CD4-positive, alpha-beta memory T cell (primary cell): ENCODE measurements at regions of chr2 and their contacts with region 1.

Region 1: DNA sequence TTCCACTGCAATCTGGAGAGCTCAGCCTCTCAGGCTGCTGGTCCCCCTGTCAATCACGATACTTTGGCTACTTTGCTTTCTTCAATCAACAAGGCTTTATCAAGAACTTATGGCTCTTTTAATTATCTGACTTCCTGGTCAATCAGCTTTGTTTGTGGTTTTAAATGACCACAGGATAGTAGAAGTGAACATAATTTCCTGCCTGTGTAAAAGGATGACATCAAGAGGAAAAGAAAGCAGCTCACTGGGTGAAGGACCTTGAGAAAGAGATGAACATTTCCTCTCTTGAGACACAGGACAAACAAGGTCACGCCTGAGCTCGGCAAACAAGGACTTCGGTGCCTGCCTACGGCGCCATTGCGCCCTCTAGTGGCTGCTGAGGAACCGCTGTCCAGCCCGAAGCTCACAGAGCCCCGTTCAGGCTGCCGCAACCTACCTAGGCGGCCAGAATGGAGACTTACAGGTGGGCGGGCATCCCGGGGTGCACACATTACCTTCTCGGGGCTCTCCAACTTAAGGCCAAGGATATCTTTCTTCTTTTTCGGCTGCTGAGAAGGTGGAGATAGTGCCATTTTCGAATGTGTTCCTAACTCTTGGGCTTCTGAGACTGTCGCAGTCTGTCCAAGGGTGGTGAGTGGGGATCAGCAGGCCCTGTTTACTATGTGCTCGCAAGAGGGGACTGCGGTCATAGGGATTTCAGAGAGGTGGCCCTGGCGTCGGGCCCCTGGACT is 54.0 kb downstream of the IL1RL2 start:
- DNase-seq: peak; percentile 77 to 83 (median 77)
- H3K4me3 ChIP-seq: no peak overlapping the region
- H3K4me3 Mint-ChIP-seq: peak overlapping the region in 4 of 8 donors; percentile 10 to 57 (median 38)
- H3K27ac ChIP-seq: no peak overlapping the region
- H3K27ac Mint-ChIP-seq: peak overlapping the region in 6 of 7 donors; percentile 3 to 78 (median 62)
- H3K4me1 ChIP-seq: peaks cover 12% of the 10 kb centered on the region
- H3K4me1 Mint-ChIP-seq: peaks cover 6 to 19% (median 11%) of the 10 kb centered on the region in 4 donors
- H3K27me3 ChIP-seq: no peaks in the 10 kb centered on the region
- H3K27me3 Mint-ChIP-seq: no peaks in the 10 kb centered on the region

Region 2: DNA sequence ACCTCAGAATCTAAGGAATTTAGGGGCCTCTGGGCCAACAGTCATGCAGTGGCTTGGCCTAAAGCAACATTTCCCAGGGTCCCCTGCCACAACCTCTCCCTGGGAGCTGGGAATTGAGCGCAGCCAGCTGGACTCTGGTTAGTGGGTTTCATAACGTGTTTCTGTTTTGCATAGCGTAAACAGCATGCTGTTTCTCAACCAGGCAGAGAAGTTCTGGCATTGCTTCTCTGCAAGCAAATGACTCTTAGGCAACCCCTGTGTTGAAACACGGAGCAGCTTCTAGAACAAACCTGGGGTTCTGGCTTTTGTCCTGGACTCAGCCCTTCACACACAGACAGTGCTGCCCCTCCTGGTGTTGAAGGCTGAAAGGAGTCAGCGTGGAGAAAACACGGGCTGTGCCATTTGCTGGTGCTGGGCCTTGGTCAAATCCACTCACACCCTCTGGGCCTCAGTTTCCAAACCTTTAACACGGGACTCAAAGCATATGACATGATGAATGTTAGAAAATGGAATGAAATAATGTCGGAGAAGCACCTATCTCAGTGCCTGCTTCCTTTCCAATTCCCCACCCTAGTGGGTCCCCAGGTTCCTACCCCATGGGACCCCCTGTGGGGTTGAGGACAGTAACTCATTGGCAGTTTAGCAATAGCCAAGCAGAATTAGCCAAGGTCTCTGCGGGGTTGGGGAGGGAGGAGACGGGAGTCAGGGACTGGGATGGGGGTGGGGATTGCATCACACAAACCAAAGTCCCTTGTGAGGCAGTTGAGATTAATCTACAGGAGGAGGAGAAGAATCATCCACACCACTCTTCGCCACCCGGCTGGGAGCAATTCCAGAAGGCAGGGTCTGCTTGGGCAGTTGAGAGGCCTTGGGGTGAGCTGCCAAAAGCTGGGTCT is 279.3 kb before region 1 on chr2:
- CTCF ChIA-PET with region 1: no interaction called
- POLR2A ChIA-PET with region 1: no interaction called
- intact Hi-C with region 1: no loop called
- DNase-seq: no peak
- H3K4me3 ChIP-seq: no peak overlapping the region
- H3K4me3 Mint-ChIP-seq: no peak overlapping the region
- H3K27ac ChIP-seq: no peak overlapping the region
- H3K27ac Mint-ChIP-seq: no peak overlapping the region
- H3K4me1 ChIP-seq: no peaks in the 10 kb centered on the region
- H3K4me1 Mint-ChIP-seq: no peaks in the 10 kb centered on the region
- H3K27me3 ChIP-seq: no peaks in the 10 kb centered on the region
- H3K27me3 Mint-ChIP-seq: peaks cover 0 to 3% of the 10 kb centered on the region in 2 donors

Region 3: GRCh38 chr2:102005989-102006885 is 234.6 kb before region 1 on chr2:
- CTCF ChIA-PET with region 1: interaction called, 73 read pairs
- POLR2A ChIA-PET with region 1: no interaction called
- intact Hi-C with region 1: no loop called
- DNase-seq: peak in 2 of 5 donors; percentile 22 to 28
- H3K4me3 ChIP-seq: no peak overlapping the region
- H3K4me3 Mint-ChIP-seq: peak overlapping the region in 3 of 8 donors; percentile 3 to 43 (median 4)
- H3K27ac ChIP-seq: no peak overlapping the region
- H3K27ac Mint-ChIP-seq: no peak overlapping the region
- H3K4me1 ChIP-seq: peaks cover 7% of the 10 kb centered on the region
- H3K4me1 Mint-ChIP-seq: peaks cover 3 to 8% (median 7%) of the 10 kb centered on the region in 4 donors
- H3K27me3 ChIP-seq: no peaks in the 10 kb centered on the region
- H3K27me3 Mint-ChIP-seq: peaks cover 3 to 4% of the 10 kb centered on the region in 2 donors

Region 4: GRCh38 chr2:102082571-102083392 is 158.0 kb before region 1 on chr2:
- CTCF ChIA-PET with region 1: interaction called, 17 read pairs
- POLR2A ChIA-PET with region 1: interaction called, 4 read pairs
- intact Hi-C with region 1: no loop called
- DNase-seq: peak; percentile 51 to 65 (median 54)
- H3K4me3 ChIP-seq: peak overlapping the region; percentile 2 to 32
- H3K4me3 Mint-ChIP-seq: peak overlapping the region; percentile 81 to 87 (median 84)
- H3K27ac ChIP-seq: peak overlapping the region; percentile 46
- H3K27ac Mint-ChIP-seq: peak overlapping the region; percentile 86 to 97 (median 95)
- H3K4me1 ChIP-seq: peaks cover 29% of the 10 kb centered on the region
- H3K4me1 Mint-ChIP-seq: peaks cover 26 to 43% (median 35%) of the 10 kb centered on the region in 4 donors
- H3K27me3 ChIP-seq: no peaks in the 10 kb centered on the region
- H3K27me3 Mint-ChIP-seq: no peaks in the 10 kb centered on the region

Region 5: DNA sequence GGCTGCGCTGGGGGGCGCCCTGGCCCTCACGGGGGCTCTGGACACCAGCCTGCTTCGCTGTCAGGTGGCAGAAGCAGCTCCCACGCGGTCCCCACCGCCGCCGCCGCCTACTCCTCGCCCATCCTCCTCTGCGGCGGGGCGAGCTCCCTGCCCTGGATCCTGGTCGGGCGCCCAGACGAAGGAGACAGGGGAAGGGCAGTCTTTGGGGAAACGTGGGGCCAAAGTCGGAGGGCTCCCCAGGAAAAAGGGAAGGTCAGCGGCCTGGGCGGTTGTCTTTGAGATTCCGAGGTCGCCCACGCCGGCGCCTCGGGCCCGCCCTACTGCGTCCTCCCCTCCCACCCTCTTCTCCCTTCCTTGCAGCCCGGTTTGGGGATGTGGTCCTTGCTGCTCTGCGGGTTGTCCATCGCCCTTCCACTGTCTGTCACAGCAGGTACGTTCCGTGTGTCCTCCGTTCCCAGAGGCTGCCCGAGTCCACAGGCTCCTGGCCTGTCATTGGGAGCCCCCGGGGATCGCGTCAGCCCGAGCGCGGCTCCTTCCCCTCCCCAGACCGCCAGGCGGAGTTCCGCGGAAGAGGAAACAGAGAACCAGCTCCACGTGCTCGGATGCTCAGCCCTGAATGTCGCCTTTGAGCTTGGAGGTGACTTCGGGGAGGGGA is 53.2 kb before region 1 on chr2:
- CTCF ChIA-PET with region 1: interaction called, 118 read pairs
- POLR2A ChIA-PET with region 1: interaction called, 10 read pairs
- intact Hi-C with region 1: loop called (anchors 1 kb)
- DNase-seq: peak; percentile 19 to 52 (median 39)
- H3K4me3 ChIP-seq: peak overlapping the region in 1 of 2 donors; percentile 36
- H3K4me3 Mint-ChIP-seq: peak overlapping the region; percentile 86 to 95 (median 88)
- H3K27ac ChIP-seq: no peak overlapping the region
- H3K27ac Mint-ChIP-seq: peak overlapping the region in 5 of 7 donors; percentile 81 to 93 (median 85)
- H3K4me1 ChIP-seq: peaks cover 9% of the 10 kb centered on the region
- H3K4me1 Mint-ChIP-seq: peaks cover 8 to 19% (median 13%) of the 10 kb centered on the region in 4 donors
- H3K27me3 ChIP-seq: no peaks in the 10 kb centered on the region
- H3K27me3 Mint-ChIP-seq: peaks cover 5 to 8% of the 10 kb centered on the region in 2 donors

Region 6: GRCh38 chr2:102217032-102217431 is 23.8 kb before region 1 on chr2:
- CTCF ChIA-PET with region 1: interaction called, 33 read pairs
- POLR2A ChIA-PET with region 1: interaction called, 3 read pairs
- intact Hi-C with region 1: no loop called
- DNase-seq: no peak
- H3K4me3 ChIP-seq: no peak overlapping the region
- H3K4me3 Mint-ChIP-seq: no peak overlapping the region
- H3K27ac ChIP-seq: no peak overlapping the region
- H3K27ac Mint-ChIP-seq: no peak overlapping the region
- H3K4me1 ChIP-seq: peaks cover 16% of the 10 kb centered on the region
- H3K4me1 Mint-ChIP-seq: peaks cover 13 to 23% (median 16%) of the 10 kb centered on the region in 4 donors
- H3K27me3 ChIP-seq: no peaks in the 10 kb centered on the region
- H3K27me3 Mint-ChIP-seq: no peaks in the 10 kb centered on the region

Region 7: DNA sequence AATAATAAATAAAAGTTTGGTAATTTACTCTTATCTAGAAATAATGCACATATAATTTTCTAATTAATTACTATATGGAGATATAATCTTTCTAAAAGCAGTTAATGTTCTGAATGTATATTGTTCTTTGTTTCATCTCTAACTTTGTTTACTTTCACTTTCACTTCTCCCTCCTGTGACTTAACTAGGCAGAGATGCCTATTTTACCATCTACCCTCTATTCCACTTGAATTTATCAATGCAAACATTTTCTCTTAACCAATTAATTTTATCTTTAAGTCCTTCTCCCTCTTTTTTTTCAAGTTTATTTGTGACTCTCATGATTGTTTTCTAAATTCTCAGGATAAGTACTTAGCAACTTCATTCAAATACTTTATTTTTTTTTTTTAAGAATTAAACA is 15.5 kb after region 1 on chr2:
- CTCF ChIA-PET with region 1: interaction called, 100 read pairs
- POLR2A ChIA-PET with region 1: no interaction called
- intact Hi-C with region 1: no loop called
- DNase-seq: peak in 2 of 5 donors; percentile 26 to 35
- H3K4me3 ChIP-seq: no peak overlapping the region
- H3K4me3 Mint-ChIP-seq: peak overlapping the region; percentile 43 to 88 (median 75)
- H3K27ac ChIP-seq: no peak overlapping the region
- H3K27ac Mint-ChIP-seq: peak overlapping the region in 5 of 7 donors; percentile 3 to 70 (median 63)
- H3K4me1 ChIP-seq: peaks cover 42% of the 10 kb centered on the region
- H3K4me1 Mint-ChIP-seq: peaks cover 29 to 58% (median 39%) of the 10 kb centered on the region in 4 donors
- H3K27me3 ChIP-seq: no peaks in the 10 kb centered on the region
- H3K27me3 Mint-ChIP-seq: peaks cover 0 to 2% of the 10 kb centered on the region in 2 donors

Region 8: GRCh38 chr2:102331311-102331980 is 90.6 kb after region 1 on chr2:
- CTCF ChIA-PET with region 1: no interaction called
- POLR2A ChIA-PET with region 1: no interaction called
- intact Hi-C with region 1: no loop called
- DNase-seq: no peak
- H3K4me3 ChIP-seq: no peak overlapping the region
- H3K4me3 Mint-ChIP-seq: no peak overlapping the region
- H3K27ac ChIP-seq: no peak overlapping the region
- H3K27ac Mint-ChIP-seq: no peak overlapping the region
- H3K4me1 ChIP-seq: no peaks in the 10 kb centered on the region
- H3K4me1 Mint-ChIP-seq: no peaks in the 10 kb centered on the region
- H3K27me3 ChIP-seq: no peaks in the 10 kb centered on the region
- H3K27me3 Mint-ChIP-seq: peaks cover 1 to 2% of the 10 kb centered on the region in 2 donors

Region 9: GRCh38 chr2:102449370-102449974 is 208.7 kb after region 1 on chr2:
- CTCF ChIA-PET with region 1: interaction called, 54 read pairs
- POLR2A ChIA-PET with region 1: no interaction called
- intact Hi-C with region 1: no loop called
- DNase-seq: peak; percentile 44 to 63 (median 49)
- H3K4me3 ChIP-seq: no peak overlapping the region
- H3K4me3 Mint-ChIP-seq: no peak overlapping the region
- H3K27ac ChIP-seq: no peak overlapping the region
- H3K27ac Mint-ChIP-seq: no peak overlapping the region
- H3K4me1 ChIP-seq: no peaks in the 10 kb centered on the region
- H3K4me1 Mint-ChIP-seq: peaks cover 0 to 2% (median 0%) of the 10 kb centered on the region in 4 donors
- H3K27me3 ChIP-seq: no peaks in the 10 kb centered on the region
- H3K27me3 Mint-ChIP-seq: no peaks in the 10 kb centered on the region